ENCODE measurements at regions of chr12 and their contacts with region 1.

Region 1: DNA sequence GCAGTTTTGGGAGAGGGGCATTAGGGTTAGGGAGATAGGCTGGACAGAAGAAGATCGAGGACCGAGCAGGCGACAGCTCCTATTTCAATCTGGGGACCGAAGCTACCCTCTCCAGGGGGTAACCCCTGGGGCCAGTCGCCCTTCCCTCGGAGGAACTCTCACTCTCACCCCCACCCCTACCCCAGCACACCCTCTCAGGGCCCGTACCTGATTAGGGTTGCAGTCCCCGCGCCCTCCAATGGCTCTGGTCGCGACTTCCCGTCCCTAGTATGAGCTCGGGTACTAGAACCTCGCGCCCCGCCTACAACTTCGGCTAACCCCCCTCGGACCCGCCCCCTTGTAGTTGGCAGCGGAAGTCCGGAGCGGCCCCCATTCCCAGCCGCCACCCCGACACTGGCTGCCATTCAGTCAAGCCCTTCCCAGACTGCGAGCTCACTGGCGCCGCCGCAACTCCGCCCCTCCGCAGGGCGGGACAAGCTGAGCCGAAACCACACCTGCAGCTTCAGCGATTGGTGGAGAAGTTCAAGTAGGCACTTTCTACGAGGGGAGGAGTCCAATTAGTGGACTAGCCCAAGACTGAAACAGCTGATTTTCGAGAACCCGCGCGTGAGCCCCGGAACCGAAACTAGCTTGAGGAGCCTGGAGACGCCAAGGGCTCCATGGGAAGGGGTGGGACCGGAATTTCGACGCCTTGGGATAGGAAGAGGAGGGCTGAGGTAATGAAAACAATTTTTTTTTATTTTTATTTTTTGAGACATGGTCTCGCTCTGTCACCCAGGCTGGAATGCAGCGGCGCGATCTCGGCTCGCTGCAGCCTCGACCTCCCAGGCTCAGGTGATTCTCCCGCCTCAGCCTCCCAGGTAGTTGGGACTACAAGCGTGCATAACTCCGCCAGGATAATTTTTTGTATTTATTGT is at the start of gene STAT2:
- H3K4me3 ChIP-seq: peak within 1 kb of the TSS; percentile 84
- H3K27ac ChIP-seq: peak within 1 kb of the TSS; percentile 53
- H3K4me1 ChIP-seq: no peaks in the 10 kb centered on the region; the same call in 1 of the 2 replicates
- CTCF ChIP-seq: no peak

Region 2: DNA sequence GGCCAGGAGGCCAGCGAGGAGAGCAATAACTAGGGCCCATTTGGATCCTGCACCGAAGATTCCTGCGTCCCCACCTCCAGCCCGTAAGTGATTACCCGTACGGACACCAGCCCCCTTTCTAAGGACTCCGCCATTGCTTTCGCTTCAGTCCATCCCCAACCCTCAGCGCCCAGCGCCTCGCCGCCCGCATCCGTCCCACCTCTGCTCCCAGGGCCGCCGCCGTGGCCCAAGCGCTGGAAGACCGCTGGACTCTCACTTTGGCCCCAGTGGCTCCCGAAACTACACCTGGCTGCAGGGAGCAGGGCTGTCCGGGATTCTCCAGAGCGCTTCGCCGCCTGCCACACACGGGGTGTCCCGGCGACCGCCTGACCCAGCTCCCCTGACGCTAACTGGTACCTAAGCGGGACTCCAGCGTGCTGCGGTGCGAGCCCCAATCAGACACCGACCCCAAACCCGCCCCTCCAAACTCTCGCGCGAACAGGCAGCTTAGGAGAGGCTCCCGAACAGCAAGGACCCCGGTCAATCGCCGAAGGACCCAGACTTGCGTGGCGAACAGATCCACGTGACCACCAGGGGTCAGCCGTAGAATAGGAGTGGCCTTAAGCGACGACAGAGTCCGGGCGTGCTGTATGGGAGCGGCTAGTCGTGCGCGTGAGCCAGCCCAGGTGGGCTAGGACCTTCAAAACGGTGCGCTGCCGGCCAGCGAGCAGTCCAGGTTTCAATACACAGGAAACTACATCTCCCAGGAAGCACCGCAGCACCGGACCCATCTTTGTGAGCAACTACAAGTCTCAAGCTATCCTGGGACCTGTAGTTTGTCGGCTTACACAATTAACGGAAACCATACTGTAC is 44.3 kb before region 1 on chr12 and contains the start of gene CNPY2:
- CTCF ChIA-PET with region 1: interaction called, 5 read pairs
- POLR2A ChIA-PET with region 1: interaction called, 46 read pairs
- H3K4me3 ChIP-seq: peak within 1 kb of the TSS; percentile 91
- H3K27ac ChIP-seq: peak within 1 kb of the TSS; percentile 76
- H3K4me1 ChIP-seq: no peaks in the 10 kb centered on the region; the same call in 1 of the 2 replicates
- CTCF ChIP-seq: peak; percentile 91

Region 3: DNA sequence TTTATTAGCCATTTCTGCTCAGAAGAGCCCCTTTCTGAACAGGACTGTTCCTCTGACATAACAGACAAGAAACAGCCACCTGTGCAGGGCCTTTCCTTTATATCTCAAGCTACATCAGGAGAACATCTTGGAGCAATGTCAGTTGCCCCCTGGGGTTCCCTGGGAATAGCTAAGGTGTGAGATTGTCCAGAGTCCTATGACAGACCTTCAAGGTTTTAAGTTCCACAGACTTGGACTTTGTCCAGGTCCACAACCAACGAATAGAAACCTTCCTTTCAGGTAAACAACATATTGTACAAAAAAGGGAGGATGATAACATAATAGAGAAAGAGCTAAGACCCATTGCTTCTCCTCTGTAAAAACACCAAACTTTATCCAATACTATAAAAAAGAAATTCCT is 18.5 kb before region 1 on chr12:
- CTCF ChIA-PET with region 1: interaction called, 4 read pairs
- POLR2A ChIA-PET with region 1: interaction called, 24 read pairs
- H3K4me3 ChIP-seq: no peak overlapping the region
- H3K27ac ChIP-seq: no peak overlapping the region
- H3K4me1 ChIP-seq: no peaks in the 10 kb centered on the region
- CTCF ChIP-seq: no peak

Region 4: DNA sequence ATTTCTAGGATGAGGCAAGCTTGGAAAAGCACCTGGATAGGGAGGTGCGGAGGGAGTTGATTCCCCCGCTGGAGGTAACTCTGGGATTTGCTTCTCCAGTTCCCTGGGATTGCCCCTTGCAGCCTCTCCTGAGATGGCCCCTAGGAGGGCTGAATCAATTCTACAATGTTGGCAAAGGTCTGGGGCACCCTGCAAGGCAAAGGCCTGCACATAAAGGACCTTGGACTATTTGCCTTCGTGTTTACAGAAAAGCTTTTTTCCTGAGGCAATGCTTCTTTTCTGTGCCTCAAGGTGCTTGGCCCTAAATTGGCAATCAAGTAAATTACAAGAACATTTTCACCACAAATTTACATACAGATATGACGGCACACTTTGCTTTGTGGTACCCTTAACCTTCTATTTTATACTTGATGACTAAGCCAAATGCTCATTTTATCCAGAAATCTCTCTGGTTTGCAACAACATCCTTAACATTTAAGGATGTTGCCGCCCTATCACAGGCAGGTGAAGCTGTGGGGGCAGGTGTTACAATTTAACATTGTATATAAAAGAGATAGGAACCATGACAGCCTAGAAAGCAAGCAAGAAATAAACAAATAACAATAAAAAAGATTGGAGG is 48.8 kb after region 1 on chr12:
- CTCF ChIA-PET with region 1: no interaction called
- POLR2A ChIA-PET with region 1: no interaction called
- H3K4me3 ChIP-seq: no peak overlapping the region
- H3K27ac ChIP-seq: no peak overlapping the region
- H3K4me1 ChIP-seq: no peaks in the 10 kb centered on the region
- CTCF ChIP-seq: no peak

Region 5: DNA sequence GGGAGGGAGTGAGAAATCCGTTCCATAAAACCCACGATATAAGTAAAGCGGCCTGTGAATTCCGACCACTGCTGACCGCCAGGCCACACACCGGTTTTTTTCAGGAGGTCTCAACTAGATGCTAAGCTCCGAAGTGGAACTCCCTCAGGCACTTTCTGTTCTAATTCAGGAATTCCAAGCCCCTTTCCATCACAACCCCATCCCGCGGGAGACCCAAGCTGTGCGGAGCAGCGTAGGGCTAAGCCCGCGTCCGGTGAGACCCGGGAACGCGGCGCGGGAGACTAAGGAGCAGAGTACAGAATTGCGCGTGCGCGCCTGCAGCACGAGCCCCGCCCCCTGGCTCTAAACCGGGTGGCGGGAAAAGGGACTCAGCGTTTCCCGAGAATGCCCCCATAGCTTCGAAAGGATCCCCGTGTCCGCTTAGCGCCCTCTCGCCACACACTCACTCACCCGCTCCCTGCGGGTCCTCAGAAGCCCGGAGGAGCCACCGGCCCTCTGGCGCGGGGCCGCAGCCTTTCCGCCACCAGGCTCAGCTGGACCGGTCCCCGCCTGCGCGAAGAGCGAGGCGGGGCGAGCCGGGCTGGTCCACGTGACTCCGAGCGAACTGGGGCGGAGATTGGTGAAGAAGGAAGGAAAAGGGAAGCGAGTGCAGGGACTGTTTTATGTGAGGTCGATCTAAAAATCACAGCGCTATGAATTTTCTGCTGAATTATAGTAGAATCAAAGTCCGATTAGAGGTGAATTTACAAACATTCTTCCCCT is 88.9 kb after region 1 on chr12 and contains the start of gene TIMELESS:
- CTCF ChIA-PET with region 1: interaction called, 3 read pairs
- POLR2A ChIA-PET with region 1: interaction called, 15 read pairs
- H3K4me3 ChIP-seq: peak within 1 kb of the TSS; percentile 59
- H3K27ac ChIP-seq: peak within 1 kb of the TSS; percentile 93
- H3K4me1 ChIP-seq: peaks cover 5% of the 10 kb centered on the region
- CTCF ChIP-seq: peak; percentile 48; the same call in 1 of the 2 replicates

Region 6: GRCh38 chr12:56521590-56522371 is 161.7 kb after region 1 on chr12 and contains the start of gene RBMS2:
- CTCF ChIA-PET with region 1: no interaction called
- POLR2A ChIA-PET with region 1: interaction called, 11 read pairs
- H3K4me3 ChIP-seq: peak within 1 kb of the TSS; percentile 29
- H3K27ac ChIP-seq: peak within 1 kb of the TSS; percentile 67
- H3K4me1 ChIP-seq: peaks cover 3% of the 10 kb centered on the region; the same call in 1 of the 2 replicates
- CTCF ChIP-seq: no peak

Measured in HEK293 (cell line).